ENCODE measurements at regions of chr18 and their contacts with region 1.

Region 1: GRCh38 chr18:44130376-44130942 is 550.2 kb upstream of the SETBP1 start:
- DNase-seq: no peak

Region 2: GRCh38 chr18:44246001-44246400 is 115.5 kb after region 1 on chr18:
- intact Hi-C with region 1: no loop called
- DNase-seq: no peak

Region 3: GRCh38 chr18:44325903-44326635 is 195.6 kb after region 1 on chr18:
- intact Hi-C with region 1: loop called (anchors 5 kb)
- DNase-seq: no peak

Measured in cardiac septum (tissue), 1 donor.